GM12878 (cell line): ENCODE measurements at regions of chr1 and their contacts with region 1.

Region 1: GRCh38 chr1:8718850-8719361 is 98.5 kb downstream of the RERE start:
- DNase-seq: no peak
- ATAC-seq: peak; percentile 58
- H3K4me3 ChIP-seq: no peak overlapping the region
- H3K27ac ChIP-seq: no peak overlapping the region
- H3K4me1 ChIP-seq: peaks cover 23% of the 10 kb centered on the region
- H3K27me3 ChIP-seq: no peaks in the 10 kb centered on the region
- CTCF ChIP-seq: peak; percentile 15 to 40 (median 22); a peak in 4 of 6 replicates
- EP300 ChIP-seq: no peak
- POLR2A ChIP-seq: no peak
- RAD21 ChIP-seq: peak; percentile 23; the same call in 1 of the 2 replicates

Region 2: DNA sequence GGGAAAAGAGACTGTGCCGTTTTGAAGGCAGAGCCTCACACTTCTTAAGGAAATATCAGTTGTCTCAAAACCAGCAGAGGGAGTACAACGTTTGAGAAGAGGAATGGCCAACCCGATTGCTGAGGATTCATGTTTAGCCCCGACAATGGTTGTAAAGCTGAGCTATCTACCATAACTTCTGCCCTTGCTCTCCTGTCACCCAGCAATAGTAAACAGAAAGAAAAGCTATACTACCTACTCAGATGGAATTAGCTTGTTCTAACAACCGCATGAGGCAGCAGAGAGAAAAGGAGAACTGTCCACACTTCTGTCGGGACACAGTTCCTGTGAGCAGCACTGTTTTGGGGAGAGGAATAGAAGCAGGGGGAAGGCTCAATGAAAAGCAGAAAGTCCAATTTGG is 309.8 kb before region 1 on chr1:
- CTCF ChIA-PET with region 1: no interaction called
- POLR2A ChIA-PET with region 1: no interaction called
- RAD21 ChIA-PET with region 1: no interaction called
- SMC1A ChIA-PET with region 1: no interaction called
- in situ Hi-C with region 1: no loop called
- intact Hi-C with region 1: no loop called
- DNase-seq: no peak
- ATAC-seq: peak; percentile 66
- H3K4me3 ChIP-seq: no peak overlapping the region
- H3K27ac ChIP-seq: no peak overlapping the region
- H3K4me1 ChIP-seq: no peaks in the 10 kb centered on the region
- H3K27me3 ChIP-seq: no peaks in the 10 kb centered on the region
- CTCF ChIP-seq: peak in 1 of 3 experiments; percentile 52; a peak in 3 of 6 replicates
- EP300 ChIP-seq: no peak
- POLR2A ChIP-seq: no peak
- RAD21 ChIP-seq: peak; percentile 31

Region 3: GRCh38 chr1:8817406-8818324 is 98.8 kb after region 1 on chr1 and contains the start of gene RERE:
- CTCF ChIA-PET with region 1: interaction called, 11 read pairs
- POLR2A ChIA-PET with region 1: interaction called, 3 read pairs
- RAD21 ChIA-PET with region 1: interaction called, 3 read pairs
- SMC1A ChIA-PET with region 1: interaction called, 8 read pairs
- in situ Hi-C with region 1: no loop called
- intact Hi-C with region 1: no loop called
- DNase-seq: peak; percentile 74
- ATAC-seq: peak; percentile 92
- H3K4me3 ChIP-seq: peak within 1 kb of the TSS; percentile 91
- H3K27ac ChIP-seq: peak within 1 kb of the TSS; percentile 95
- H3K4me1 ChIP-seq: no peaks in the 10 kb centered on the region
- H3K27me3 ChIP-seq: no peaks in the 10 kb centered on the region
- CTCF ChIP-seq: 0 out of 6 replicates have a peak, but pooled peaks of 1 of the 3 experiments have one; percentile 0
- EP300 ChIP-seq: no peak
- POLR2A ChIP-seq: peak; percentile 92
- RAD21 ChIP-seq: no peak
- polyA plus RNA-seq, gene RERE: 5.2 to 5.9 TPM